Left lung (tissue), 14 donors: ENCODE measurements at regions of chr14 and their contacts with region 1.

Region 1: DNA sequence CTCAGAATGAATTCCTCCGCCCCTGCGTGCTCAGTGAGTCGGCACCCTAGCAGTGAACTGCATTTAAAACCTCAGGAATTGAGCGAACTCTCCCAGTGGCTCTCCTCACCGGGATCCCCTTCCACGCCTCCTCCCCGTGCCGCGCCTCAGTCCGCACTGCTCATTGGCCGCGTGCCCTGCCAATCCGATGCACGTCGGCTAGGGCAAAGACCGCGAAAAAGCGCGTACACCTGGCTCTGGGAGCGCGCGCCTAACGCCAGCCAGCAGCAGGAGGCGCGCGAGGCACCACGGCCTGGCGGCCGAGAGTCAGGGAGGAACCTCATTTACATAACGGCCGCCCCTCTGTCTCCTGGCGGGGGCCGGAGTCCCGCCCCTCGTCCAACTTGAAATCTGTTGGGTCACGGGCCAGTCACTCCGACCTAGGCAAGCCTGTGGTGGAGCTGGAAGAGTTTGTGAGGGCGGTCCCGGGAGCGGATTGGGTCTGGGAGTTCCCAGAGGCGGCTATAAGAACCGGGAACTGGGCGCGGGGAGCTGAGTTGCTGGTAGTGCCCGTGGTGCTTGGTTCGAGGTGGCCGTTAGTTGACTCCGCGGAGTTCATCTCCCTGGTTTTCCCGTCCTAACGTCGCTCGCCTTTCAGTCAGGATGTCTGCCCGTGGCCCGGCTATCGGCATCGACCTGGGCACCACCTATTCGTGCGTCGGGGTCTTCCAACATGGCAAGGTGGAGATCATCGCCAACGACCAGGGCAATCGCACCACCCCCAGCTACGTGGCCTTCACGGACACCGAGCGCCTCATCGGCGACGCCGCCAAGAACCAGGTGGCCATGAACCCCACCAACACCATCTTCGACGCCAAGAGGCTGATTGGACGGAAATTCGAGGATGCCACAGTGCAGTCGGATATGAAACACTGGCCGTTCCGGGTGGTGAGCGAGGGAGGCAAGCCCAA is at the start of gene HSPA2:
- DNase-seq: peak; percentile 96 to 99 (median 99)
- ATAC-seq: peak; percentile 96
- H3K4me3 ChIP-seq: peak within 1 kb of the TSS; percentile 49 to 55
- H3K27ac ChIP-seq: peak within 1 kb of the TSS; percentile 78 to 83
- H3K4me1 ChIP-seq: peaks cover 3 to 28% of the 10 kb centered on the region in 2 donors
- H3K27me3 ChIP-seq: peaks cover 14 to 49% of the 10 kb centered on the region in 2 donors
- CTCF ChIP-seq: peak; percentile 74 to 83
- polyA plus RNA-seq, gene HSPA2: 7.0 to 17.1 (median 12.3) TPM

Region 2: GRCh38 chr14:64349741-64350490 is 190.6 kb before region 1 on chr14:
- intact Hi-C with region 1: no loop called
- DNase-seq: no peak
- ATAC-seq: no peak
- H3K4me3 ChIP-seq: no peak overlapping the region
- H3K27ac ChIP-seq: no peak overlapping the region
- H3K4me1 ChIP-seq: no peaks in the 10 kb centered on the region
- H3K27me3 ChIP-seq: no peaks in the 10 kb centered on the region
- CTCF ChIP-seq: no peak

Region 3: DNA sequence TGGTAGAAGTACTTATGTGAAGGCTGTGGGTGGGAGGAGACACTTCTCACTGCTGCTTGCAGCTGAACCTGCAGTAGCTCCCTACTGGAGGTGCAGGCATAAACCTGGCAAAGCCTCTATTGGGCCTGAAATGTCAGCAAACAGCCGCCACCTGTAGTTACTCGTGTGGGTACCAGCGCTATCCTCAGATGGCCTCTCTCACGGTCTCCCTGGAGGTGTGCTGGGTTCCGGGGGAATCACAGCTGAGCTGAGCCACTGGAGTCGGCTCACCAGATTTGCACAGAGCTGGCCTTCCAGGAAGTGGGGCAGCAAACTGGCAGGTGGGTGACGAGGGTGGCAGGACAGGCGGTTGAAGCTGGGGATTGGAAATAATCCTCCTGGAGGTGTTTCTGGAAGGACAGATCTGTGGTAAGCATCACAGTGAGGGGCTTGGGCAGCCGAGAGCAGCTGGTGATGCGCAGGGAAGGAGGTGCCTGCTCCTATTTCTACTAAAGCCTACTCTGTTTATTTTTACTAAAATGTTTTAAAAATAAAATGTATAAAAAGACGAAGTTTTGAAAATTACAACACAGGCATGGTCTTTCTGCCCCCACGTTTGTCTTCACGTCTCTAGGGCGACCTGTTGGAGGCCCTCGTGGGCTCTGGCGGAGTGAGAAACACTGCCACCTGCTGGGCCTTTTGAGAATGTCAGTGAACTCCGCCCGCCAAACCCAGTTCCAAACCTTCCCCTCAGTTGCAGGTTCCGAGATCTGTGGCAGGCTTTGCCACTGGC is 95.9 kb after region 1 on chr14:
- intact Hi-C with region 1: loop called in 1 of 2 experiments (anchors 10 kb)
- DNase-seq: peak in 3 of 4 donors; percentile 67 to 87 (median 78)
- ATAC-seq: peak; percentile 95
- H3K4me3 ChIP-seq: no peak overlapping the region
- H3K27ac ChIP-seq: no peak overlapping the region
- H3K4me1 ChIP-seq: peaks cover 0 to 19% of the 10 kb centered on the region in 2 donors
- H3K27me3 ChIP-seq: peaks cover 0 to 2% of the 10 kb centered on the region in 2 donors
- CTCF ChIP-seq: peak; percentile 82 to 93